ENCODE measurements at regions of chr7 and their contacts with region 1.

Region 1: DNA sequence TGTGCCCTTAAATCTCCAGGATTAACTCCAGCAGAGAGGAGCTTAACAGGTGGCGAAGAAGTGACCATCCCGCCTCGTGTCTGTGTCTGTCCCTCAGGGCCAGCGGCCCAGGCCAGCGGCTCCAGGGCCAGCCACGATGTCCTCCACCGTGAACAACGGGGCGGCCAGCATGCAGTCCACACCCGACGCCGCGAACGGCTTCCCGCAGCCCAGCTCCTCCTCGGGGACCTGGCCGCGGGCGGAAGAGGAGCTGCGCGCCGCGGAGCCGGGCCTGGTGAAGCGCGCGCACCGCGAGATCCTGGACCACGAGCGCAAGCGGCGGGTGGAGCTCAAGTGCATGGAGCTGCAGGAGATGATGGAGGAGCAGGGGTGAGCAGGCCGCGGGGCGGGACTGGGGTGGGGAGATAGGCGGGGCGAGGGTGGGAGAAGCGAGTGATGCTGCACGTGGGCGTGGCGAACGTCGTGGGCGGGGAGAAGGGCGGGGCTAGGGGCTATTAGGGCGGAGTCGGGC is 33.3 kb downstream of the SRRM3 start:
- DNase-seq: peak; percentile 100
- H3K4me3 ChIP-seq: peak overlapping the region in 1 of 2 experiments; percentile 19; a peak in 1 of 4 replicates
- H3K27ac ChIP-seq: peak overlapping the region in 1 of 2 experiments; percentile 65; a peak in 2 of 4 replicates
- H3K4me1 ChIP-seq: peaks cover 0 to 8% of the 10 kb centered on the region in 2 experiments; a peak in 1 of 4 replicates
- H3K27me3 ChIP-seq: peaks cover 5% of the 10 kb centered on the region; the same call in 1 of the 2 replicates
- CTCF ChIP-seq: no peak
- EP300 ChIP-seq: no peak
- RAD21 ChIP-seq: no peak

Region 2: GRCh38 chr7:76133164-76133775 is 101.7 kb before region 1 on chr7:
- CTCF ChIA-PET with region 1: no interaction called
- POLR2A ChIA-PET with region 1: no interaction called
- DNase-seq: no peak
- H3K4me3 ChIP-seq: no peak overlapping the region
- H3K27ac ChIP-seq: no peak overlapping the region
- H3K4me1 ChIP-seq: no peaks in the 10 kb centered on the region
- H3K27me3 ChIP-seq: peaks cover 21% of the 10 kb centered on the region; the same call in 1 of the 2 replicates
- CTCF ChIP-seq: no peak
- EP300 ChIP-seq: no peak
- RAD21 ChIP-seq: no peak

Region 3: DNA sequence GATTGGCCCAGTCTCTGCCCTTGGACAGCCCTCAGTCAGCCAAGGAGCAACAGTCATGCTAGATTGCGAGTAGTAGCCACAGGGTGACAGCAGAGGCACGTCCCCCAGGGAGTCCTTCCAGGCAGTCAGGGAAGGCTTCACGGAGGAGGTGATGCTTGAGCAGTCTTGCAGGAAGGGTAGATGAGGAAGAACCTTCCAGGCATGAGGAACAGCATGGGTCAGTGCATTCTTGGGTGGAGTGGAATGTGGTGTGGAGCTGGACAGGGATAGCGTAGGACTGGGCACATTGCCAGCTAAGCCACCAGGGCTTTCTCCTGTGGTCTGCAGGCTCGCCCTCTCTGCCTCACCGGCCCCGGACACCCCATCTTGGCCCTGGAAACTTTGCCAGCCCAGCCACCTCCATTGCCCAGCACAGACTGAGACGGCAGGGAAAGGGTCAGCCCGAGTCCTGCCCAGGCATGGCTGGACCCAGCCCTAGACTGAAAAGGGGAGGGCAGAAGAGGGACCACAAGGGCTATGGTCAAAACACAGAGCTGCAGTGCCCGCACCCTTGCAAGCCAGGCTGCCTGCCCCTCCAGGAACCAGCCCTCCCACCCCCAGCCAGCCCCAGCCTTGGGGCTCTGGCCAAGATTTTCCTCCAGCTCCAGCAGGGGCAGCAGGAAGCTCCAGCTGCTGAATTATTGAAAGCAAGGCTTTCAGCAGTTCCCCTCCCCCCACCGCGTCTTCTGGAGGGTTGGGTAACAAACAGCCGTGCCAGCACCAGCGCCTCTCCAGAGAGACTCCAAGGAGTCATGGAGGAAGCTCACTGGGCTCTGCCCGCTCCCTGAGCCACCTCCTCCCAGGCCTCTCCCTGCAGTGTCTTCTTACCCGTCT is 14.6 kb before region 1 on chr7:
- CTCF ChIA-PET with region 1: interaction called, 12 read pairs
- POLR2A ChIA-PET with region 1: interaction called, 4 read pairs
- DNase-seq: peak; percentile 81
- H3K4me3 ChIP-seq: no peak overlapping the region
- H3K27ac ChIP-seq: peak overlapping the region in 1 of 2 experiments; percentile 36; a peak in 2 of 4 replicates
- H3K4me1 ChIP-seq: peaks cover 0 to 20% of the 10 kb centered on the region in 2 experiments; a peak in 1 of 4 replicates
- H3K27me3 ChIP-seq: peaks cover 28% of the 10 kb centered on the region; the same call in 1 of the 2 replicates
- CTCF ChIP-seq: no peak; the same call in 1 of the 2 replicates
- EP300 ChIP-seq: no peak; a peak in 1 of 4 replicates
- RAD21 ChIP-seq: peak; percentile 48